Activated CD4-positive, alpha-beta T cell treated with anti-CD3 and anti-CD28 coated beads for 36 hours (primary cell): ENCODE measurements at regions of chr1 and their contacts with region 1.

Region 1: DNA sequence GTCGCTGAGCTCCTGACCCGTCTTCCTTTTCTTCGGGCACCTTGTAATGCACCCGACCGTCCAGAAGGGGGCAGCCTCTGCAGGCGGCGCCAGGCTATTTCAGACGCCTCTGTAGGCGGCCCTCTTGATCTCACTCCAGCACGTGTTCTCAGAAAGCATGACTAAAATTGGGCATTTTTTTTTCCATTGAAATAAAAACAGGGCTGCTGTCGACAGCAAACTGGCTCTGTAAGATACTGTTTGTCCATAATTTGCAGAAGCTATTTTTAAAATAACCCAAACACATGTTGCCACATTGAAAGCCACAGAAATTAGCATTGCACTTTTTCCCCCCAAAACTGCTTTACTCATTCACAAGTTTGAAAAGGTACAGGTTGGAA is 78.0 kb downstream of the STUM start:
- DNase-seq: peak; percentile 91
- ATAC-seq: peak; percentile 82
- H3K4me3 Mint-ChIP-seq: peak overlapping the region; percentile 46
- H3K27ac Mint-ChIP-seq: peak overlapping the region; percentile 90
- H3K4me1 Mint-ChIP-seq: peaks cover 26% of the 10 kb centered on the region
- H3K27me3 Mint-ChIP-seq: no peaks in the 10 kb centered on the region

Region 2: DNA sequence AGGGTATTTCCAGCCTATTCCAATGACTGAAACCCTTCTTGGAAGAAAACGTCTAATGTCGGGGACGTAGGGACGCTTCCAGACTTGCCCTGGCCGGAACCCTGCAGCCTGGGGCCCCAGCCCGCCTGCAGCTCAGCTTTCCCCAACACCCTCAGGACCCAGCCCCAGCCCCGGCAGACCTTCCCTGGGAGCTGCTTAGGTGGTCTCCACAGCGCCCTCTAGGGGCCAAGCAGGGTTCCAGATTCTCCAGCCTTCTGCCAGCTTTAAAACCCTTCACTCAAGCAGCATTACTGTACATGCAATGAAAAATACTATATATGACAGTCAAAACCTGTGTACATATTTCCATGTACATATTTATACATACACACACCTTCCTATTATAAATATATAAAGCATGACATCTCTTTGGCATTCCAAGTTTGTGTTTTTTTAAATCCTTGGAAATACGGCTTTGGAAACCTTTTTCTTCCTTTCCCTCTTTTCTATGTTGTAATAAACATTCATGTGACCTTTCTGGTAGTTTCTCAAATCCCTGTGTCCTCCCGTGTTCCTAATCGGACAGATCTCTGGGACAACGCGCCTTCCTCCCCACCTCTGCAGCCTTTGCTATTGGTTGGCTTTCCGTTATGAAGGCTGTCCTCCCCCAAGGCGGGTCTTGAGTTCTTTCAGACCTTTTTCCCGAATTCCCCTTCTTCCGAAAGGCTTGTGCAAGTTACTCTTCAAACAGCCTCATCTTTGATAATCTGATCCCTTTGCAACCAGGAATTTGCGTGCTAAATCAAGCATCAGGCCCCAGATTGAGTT is 17.7 kb before region 1 on chr1:
- CTCF ChIA-PET with region 1: interaction called, 10 read pairs
- POLR2A ChIA-PET with region 1: no interaction called
- intact Hi-C with region 1: no loop called
- DNase-seq: peak; percentile 85
- ATAC-seq: peak; percentile 89
- H3K4me3 Mint-ChIP-seq: no peak overlapping the region
- H3K27ac Mint-ChIP-seq: no peak overlapping the region
- H3K4me1 Mint-ChIP-seq: no peaks in the 10 kb centered on the region
- H3K27me3 Mint-ChIP-seq: no peaks in the 10 kb centered on the region

Region 3: DNA sequence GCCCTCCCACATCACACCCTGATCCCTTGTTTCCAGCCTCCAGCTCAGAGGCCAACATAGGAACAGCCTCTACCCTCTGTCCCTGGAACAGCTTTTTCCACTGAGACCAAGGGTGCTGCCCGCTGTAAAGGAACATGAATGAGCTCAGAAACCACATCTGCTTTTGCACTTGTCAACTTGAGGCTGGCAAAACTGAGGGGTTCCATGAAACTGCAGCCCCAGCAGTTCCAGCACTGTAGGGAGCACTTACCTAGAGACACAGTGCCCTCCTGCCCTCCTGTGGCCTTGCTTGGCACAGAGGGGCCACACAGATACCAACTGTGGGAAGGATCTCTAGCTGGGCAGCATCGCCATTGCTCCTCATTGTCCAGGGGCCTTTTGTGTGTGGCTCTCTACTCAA is 60.9 kb after region 1 on chr1:
- CTCF ChIA-PET with region 1: interaction called, 12 read pairs
- POLR2A ChIA-PET with region 1: no interaction called
- intact Hi-C with region 1: loop called in 1 of 2 experiments (anchors 2 kb)
- DNase-seq: peak; percentile 75
- ATAC-seq: peak; percentile 36
- H3K4me3 Mint-ChIP-seq: no peak overlapping the region
- H3K27ac Mint-ChIP-seq: peak overlapping the region; percentile 100
- H3K4me1 Mint-ChIP-seq: peaks cover 100% of the 10 kb centered on the region
- H3K27me3 Mint-ChIP-seq: no peaks in the 10 kb centered on the region

Region 4: DNA sequence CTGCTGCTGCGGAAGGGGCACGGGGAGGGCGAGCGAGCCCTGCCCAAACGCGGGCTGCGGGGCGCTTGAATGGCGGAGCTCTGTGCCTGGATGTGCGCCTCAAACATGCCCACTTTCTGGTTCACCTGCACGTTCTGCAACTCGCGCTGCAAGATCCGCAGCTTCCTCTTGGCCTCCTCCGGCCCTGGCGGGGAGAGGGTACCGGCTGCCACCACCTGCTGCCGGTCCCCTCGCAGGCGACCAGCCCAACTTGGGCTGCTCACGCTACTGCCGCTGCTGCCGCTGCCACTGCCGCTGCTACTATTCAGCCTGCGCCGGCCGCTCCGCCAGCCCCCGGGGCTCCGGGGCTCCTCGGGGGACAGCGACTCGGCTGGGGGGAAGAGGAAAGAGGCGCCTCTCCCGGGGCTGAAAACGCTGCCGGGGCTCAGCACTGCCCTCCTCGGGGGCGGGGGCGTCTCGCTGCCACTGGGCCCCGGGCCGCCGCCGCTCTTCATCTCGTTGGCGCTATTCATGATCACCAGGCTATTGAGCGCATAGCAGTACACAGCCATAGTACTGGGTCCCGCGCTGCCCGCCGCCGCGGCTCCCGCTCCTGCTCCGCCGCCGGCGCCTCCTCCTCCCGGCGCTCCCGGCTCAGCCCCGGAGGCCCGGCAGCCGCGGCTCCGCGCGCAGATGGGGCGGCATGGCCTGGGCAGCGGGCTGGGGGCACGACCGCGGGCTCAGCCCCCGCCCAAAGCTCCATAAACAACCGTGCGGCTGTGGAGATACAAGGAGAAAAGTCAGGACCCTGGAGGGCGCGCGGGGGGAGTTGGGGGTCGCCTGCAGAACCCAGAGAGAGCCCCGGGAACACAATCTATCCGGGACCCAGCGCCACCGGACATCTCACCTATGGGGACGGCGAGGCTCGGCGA is 110.6 kb after region 1 on chr1:
- CTCF ChIA-PET with region 1: interaction called, 8 read pairs
- POLR2A ChIA-PET with region 1: no interaction called
- intact Hi-C with region 1: loop called in 1 of 2 experiments (anchors 2 kb)
- DNase-seq: peak; percentile 79
- ATAC-seq: peak; percentile 46
- H3K4me3 Mint-ChIP-seq: peak overlapping the region; percentile 88
- H3K27ac Mint-ChIP-seq: peak overlapping the region; percentile 85
- H3K4me1 Mint-ChIP-seq: peaks cover 42% of the 10 kb centered on the region
- H3K27me3 Mint-ChIP-seq: no peaks in the 10 kb centered on the region

Region 5: GRCh38 chr1:226882631-226883409 is 256.3 kb after region 1 on chr1:
- CTCF ChIA-PET with region 1: interaction called, 5 read pairs
- POLR2A ChIA-PET with region 1: interaction called, 3 read pairs
- intact Hi-C with region 1: loop called in 1 of 2 experiments (anchors 1 kb)
- DNase-seq: peak; percentile 54
- ATAC-seq: peak; percentile 92
- H3K4me3 Mint-ChIP-seq: peak overlapping the region; percentile 64
- H3K27ac Mint-ChIP-seq: peak overlapping the region; percentile 91
- H3K4me1 Mint-ChIP-seq: peaks cover 53% of the 10 kb centered on the region
- H3K27me3 Mint-ChIP-seq: no peaks in the 10 kb centered on the region

Region 6: GRCh38 chr1:226990133-226990716 is 363.7 kb after region 1 on chr1:
- CTCF ChIA-PET with region 1: no interaction called
- POLR2A ChIA-PET with region 1: no interaction called
- intact Hi-C with region 1: loop called in 1 of 2 experiments (anchors 1 kb)
- DNase-seq: peak; percentile 85
- ATAC-seq: peak; percentile 100
- H3K4me3 Mint-ChIP-seq: no peak overlapping the region
- H3K27ac Mint-ChIP-seq: peak overlapping the region; percentile 83
- H3K4me1 Mint-ChIP-seq: peaks cover 25% of the 10 kb centered on the region
- H3K27me3 Mint-ChIP-seq: no peaks in the 10 kb centered on the region

Region 7: GRCh38 chr1:227437495-227438008 is 811.0 kb after region 1 on chr1:
- CTCF ChIA-PET with region 1: no interaction called
- POLR2A ChIA-PET with region 1: no interaction called
- intact Hi-C with region 1: loop called in 1 of 2 experiments (anchors 2 kb)
- DNase-seq: no peak
- ATAC-seq: no peak
- H3K4me3 Mint-ChIP-seq: no peak overlapping the region
- H3K27ac Mint-ChIP-seq: no peak overlapping the region
- H3K4me1 Mint-ChIP-seq: no peaks in the 10 kb centered on the region
- H3K27me3 Mint-ChIP-seq: peaks cover 24% of the 10 kb centered on the region